ENCODE measurements at regions of chr22 and their contacts with region 1.

Region 1: GRCh38 chr22:22348127-22348814 is 103.7 kb downstream of the VPREB1 start:
- DNase-seq: no peak
- ATAC-seq: peak; percentile 42; the same call in 1 of the 2 replicates
- H3K4me3 ChIP-seq: no peak overlapping the region
- H3K27ac ChIP-seq: no peak overlapping the region
- H3K4me1 ChIP-seq: no peaks in the 10 kb centered on the region
- H3K27me3 ChIP-seq: peaks cover 38% of the 10 kb centered on the region
- CTCF ChIP-seq: 0 out of 2 replicates have a peak, but pooled peaks have one; percentile 2
- POLR2A ChIP-seq: no peak
- RAD21 ChIP-seq: no peak

Region 2: DNA sequence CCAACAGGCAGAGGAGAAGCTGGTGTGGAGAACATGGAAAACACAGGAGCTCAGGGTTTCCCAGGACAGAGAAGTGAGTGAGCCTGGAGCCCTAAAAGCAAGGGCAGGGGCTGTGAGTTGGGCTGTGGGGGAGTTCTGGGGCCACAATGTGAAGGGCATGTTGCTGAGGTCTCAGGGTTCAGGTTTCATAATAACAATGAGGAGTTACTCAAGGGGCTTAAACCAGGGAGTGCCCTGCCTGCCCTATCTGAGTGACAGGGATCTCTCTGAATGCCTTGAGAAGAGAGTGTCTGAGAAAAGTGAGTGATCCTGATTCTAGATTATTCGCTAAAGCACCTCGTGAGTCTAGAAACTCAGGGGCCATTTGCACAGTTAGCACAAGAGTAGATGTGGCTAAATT is 25.9 kb after region 1 on chr22:
- CTCF ChIA-PET with region 1: no interaction called
- POLR2A ChIA-PET with region 1: no interaction called
- dilution Hi-C with region 1: no loop called
- in situ Hi-C with region 1: no loop called
- intact Hi-C with region 1: loop called (anchors 1 kb)
- DNase-seq: no peak
- ATAC-seq: no peak
- H3K4me3 ChIP-seq: no peak overlapping the region
- H3K27ac ChIP-seq: no peak overlapping the region
- H3K4me1 ChIP-seq: no peaks in the 10 kb centered on the region
- H3K27me3 ChIP-seq: peaks cover 14% of the 10 kb centered on the region; the same call in 1 of the 2 replicates
- CTCF ChIP-seq: no peak
- POLR2A ChIP-seq: no peak
- RAD21 ChIP-seq: no peak

Region 3: DNA sequence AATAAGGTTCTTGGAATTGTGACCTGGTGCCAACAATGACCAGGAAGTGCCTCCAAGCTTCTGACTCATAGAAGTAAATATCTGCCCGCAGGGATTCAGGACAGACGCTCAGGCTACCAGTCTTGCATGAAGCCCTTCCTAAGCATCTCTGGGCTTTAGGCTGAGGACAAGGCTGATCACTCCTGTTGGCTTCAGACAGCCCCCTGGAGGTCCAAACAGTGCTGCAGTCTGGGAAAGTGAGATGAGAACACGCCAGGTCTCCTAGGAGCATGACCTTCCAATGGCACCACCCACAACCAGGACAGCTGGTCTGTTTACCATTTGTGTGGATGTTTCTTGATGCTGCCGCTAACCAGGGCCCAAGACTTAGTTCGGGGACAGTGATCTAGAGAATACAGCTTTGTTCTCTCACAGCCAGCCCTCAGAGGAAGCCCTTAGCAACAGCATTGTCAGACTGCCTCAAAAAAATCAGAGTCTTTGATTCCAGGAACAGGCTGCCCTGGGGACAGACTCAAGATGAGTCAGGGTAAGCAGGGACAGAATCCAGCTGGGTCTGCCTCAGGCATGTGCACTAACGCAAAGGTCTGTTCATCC is 49.1 kb after region 1 on chr22:
- CTCF ChIA-PET with region 1: no interaction called
- POLR2A ChIA-PET with region 1: no interaction called
- dilution Hi-C with region 1: no loop called
- in situ Hi-C with region 1: loop called (anchors 5 kb)
- intact Hi-C with region 1: no loop called
- DNase-seq: no peak
- ATAC-seq: peak; percentile 53
- H3K4me3 ChIP-seq: no peak overlapping the region
- H3K27ac ChIP-seq: no peak overlapping the region
- H3K4me1 ChIP-seq: peaks cover 3% of the 10 kb centered on the region; the same call in 1 of the 2 replicates
- H3K27me3 ChIP-seq: peaks cover 12% of the 10 kb centered on the region
- CTCF ChIP-seq: no peak
- POLR2A ChIP-seq: no peak
- RAD21 ChIP-seq: no peak

Region 4: GRCh38 chr22:22422629-22423112 is 74.4 kb after region 1 on chr22:
- CTCF ChIA-PET with region 1: no interaction called
- POLR2A ChIA-PET with region 1: no interaction called
- dilution Hi-C with region 1: no loop called
- in situ Hi-C with region 1: no loop called
- intact Hi-C with region 1: no loop called
- DNase-seq: peak; percentile 48
- ATAC-seq: peak; percentile 81
- H3K4me3 ChIP-seq: no peak overlapping the region
- H3K27ac ChIP-seq: no peak overlapping the region
- H3K4me1 ChIP-seq: no peaks in the 10 kb centered on the region
- H3K27me3 ChIP-seq: peaks cover 18% of the 10 kb centered on the region
- CTCF ChIP-seq: peak; percentile 60
- POLR2A ChIP-seq: no peak
- RAD21 ChIP-seq: no peak